HEK293 (cell line): ENCODE measurements at regions of chr3 and their contacts with region 1.

Region 1: GRCh38 chr3:66971891-66972551 is 26.1 kb upstream of the KBTBD8 start:
- H3K4me3 ChIP-seq: no peak overlapping the region
- H3K27ac ChIP-seq: no peak overlapping the region
- H3K4me1 ChIP-seq: no peaks in the 10 kb centered on the region
- CTCF ChIP-seq: peak; percentile 33; the same call in 1 of the 2 replicates

Region 2: DNA sequence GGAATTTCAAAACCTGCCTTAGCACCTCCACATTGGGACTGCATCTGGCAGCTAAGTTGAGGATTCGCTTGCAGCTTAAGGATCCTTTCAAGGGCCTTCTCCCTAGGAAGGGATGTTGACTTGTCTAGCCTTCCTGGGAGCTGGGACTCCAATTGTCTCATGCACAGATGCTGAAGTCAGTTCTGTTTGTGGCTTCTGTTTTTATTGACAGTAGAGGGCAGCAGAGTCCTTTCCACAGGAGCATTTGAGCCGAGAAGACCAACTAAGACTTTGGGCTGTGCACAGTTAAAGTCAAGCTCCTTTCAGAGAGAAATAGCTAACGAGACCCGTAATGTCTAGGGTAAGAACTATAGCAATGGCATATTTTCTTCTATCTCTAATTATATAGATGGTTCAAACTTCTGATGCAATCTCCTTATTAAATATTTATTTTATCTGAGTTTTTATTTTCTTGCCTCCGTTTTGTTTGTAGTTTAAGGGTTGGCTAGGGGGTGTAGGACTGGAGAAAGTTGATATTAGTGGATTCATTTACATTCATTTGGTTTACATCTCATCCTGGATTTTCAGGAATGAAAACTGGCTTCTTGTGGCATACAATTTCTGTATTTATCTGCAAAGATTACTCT is 33.6 kb before region 1 on chr3:
- CTCF ChIA-PET with region 1: interaction called, 21 read pairs
- POLR2A ChIA-PET with region 1: no interaction called
- H3K4me3 ChIP-seq: no peak overlapping the region
- H3K27ac ChIP-seq: no peak overlapping the region
- H3K4me1 ChIP-seq: no peaks in the 10 kb centered on the region
- CTCF ChIP-seq: 0 out of 2 replicates have a peak, but pooled peaks have one; percentile 18

Region 3: DNA sequence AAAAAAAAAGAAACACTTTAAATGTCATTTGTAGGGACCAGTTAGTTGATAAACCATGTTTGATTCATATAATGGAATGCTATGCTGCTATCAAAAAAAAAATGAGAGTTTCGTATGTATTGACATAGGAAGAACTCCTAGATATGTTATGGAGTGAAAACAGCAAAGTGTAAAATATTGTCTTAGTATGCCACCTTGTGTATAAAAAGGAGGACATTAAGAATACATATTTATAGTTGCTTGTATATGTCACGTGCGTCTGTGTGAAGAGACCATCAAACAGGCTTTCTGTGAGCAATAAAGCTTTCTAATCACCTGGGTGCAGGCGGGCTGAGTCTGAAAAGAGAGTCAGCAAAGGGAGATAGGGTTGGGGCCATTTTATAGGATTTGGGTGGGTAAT is 65.6 kb after region 1 on chr3:
- CTCF ChIA-PET with region 1: interaction called, 19 read pairs
- POLR2A ChIA-PET with region 1: no interaction called
- H3K4me3 ChIP-seq: no peak overlapping the region
- H3K27ac ChIP-seq: no peak overlapping the region
- H3K4me1 ChIP-seq: no peaks in the 10 kb centered on the region
- CTCF ChIP-seq: no peak

Region 4: GRCh38 chr3:67113802-67114407 is 141.9 kb after region 1 on chr3:
- CTCF ChIA-PET with region 1: interaction called, 18 read pairs
- POLR2A ChIA-PET with region 1: no interaction called
- H3K4me3 ChIP-seq: no peak overlapping the region
- H3K27ac ChIP-seq: no peak overlapping the region
- H3K4me1 ChIP-seq: no peaks in the 10 kb centered on the region
- CTCF ChIP-seq: peak; percentile 70; the same call in 1 of the 2 replicates